Right ventricle myocardium inferior (tissue), 1 donor: ENCODE measurements at regions of chrX and their contacts with region 1.

Region 1: DNA sequence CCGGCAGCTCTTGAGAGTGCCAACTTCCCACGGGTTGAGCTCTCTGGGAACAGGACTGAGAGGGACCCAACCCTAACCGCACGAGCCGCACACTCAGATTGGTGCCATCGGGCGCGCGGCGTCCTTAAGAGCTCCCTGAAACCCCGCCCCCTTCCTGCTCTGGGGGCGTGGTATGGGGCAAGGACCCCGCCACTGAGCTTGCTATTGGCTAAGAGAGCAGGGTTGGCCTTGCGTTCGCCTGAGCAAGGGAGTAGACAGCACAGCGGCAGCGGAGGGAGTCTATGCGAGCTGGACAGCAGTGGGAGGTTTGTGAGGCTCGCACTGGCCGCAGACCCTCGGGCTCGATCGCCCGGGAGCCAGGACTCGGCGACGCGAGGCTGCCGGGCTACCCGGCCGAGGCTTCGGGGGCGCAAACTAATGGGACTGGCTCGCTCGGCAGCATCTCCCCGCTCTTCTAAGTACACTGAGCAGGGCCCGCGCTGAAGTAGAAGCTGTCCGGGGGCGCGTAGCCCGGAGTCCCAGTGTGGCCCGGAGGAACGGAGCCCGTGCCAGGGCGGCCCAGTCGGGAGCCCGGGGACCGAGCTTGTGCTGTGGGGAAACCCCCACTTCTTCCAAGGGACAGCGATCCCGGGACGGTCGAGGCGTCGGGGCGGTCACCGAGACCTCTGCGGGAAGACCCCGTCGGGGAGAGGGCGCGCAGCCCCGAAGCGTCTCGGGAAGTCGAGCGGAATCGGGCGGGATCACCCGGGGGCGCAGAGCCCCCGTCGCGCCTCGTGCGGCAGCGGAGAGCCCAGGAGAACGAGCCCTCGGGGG is at the start of gene EFNB1:
- DNase-seq: peak; percentile 96
- ATAC-seq: peak; percentile 97
- total RNA-seq, gene EFNB1: 18.0 TPM

Region 2: DNA sequence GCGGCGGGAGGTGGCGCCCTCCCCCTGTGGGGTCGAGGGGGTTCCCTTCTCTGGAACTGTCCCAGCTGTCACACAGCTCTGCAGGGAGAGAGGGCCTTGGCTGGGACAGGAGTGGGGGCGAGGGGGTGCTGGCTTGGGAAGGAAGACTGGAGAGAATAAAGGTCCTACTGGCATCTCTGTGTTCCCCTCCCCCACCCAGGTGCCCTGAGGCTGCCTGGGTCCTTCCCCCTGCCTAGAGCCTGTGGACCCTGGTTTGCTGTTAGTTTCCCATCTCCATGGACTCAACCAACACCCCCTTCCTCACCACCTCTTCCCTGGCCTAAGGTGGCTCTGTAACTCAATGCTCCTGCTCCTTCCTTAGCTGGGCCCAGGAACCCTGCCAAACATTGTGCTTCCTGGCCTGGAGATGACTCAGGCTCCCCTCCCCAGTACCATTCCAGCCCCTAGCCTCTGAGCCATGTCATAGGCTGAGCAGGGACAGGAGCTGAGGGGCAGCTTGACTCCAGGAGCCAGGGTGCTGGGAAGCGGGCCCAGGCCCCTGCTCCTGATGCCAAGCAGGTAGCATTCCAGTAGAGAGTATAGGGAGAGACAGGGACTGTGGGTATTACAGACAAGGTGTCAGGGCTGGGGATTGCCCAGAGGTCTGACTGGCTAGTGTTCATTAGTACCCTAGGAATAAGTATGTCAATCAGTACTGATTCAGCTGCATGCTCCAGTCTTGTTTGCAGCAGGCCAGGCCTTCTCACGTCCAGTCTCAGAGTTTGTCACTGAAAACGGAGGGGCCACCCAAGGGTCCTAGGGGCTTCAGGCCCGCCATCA is 100.6 kb after region 1 on chrX:
- intact Hi-C with region 1: loop called (anchors 2 kb)
- DNase-seq: no peak
- ATAC-seq: peak; percentile 29

Region 3: DNA sequence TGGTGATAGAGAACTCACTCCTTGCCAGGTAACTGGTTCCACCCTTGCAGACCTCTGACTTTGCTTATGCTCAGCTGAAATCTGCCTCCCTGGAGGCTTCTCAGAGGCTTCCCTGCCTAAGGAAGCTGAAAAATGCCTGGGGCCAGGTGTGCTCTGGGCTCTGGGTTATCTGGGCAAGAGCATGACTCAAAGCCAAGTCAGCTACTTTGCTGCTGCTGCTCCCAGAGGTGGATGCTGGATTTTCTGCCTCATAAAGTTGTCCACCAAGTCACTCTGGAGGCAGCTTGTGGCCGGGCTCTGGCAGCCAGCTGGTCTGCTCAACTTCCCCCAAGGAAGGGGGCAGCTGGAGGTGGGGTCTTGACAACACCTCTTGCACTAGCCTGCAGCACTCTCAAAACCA is 203.7 kb after region 1 on chrX:
- intact Hi-C with region 1: no loop called
- DNase-seq: no peak
- ATAC-seq: no peak

Region 4: GRCh38 chrX:69060631-69061408 is 231.9 kb after region 1 on chrX:
- intact Hi-C with region 1: loop called (anchors 1 kb)
- DNase-seq: no peak
- ATAC-seq: peak; percentile 62

Region 5: GRCh38 chrX:69222103-69223090 is 393.5 kb after region 1 on chrX:
- intact Hi-C with region 1: loop called (anchors 2 kb)
- DNase-seq: peak; percentile 74
- ATAC-seq: peak; percentile 76

Region 6: DNA sequence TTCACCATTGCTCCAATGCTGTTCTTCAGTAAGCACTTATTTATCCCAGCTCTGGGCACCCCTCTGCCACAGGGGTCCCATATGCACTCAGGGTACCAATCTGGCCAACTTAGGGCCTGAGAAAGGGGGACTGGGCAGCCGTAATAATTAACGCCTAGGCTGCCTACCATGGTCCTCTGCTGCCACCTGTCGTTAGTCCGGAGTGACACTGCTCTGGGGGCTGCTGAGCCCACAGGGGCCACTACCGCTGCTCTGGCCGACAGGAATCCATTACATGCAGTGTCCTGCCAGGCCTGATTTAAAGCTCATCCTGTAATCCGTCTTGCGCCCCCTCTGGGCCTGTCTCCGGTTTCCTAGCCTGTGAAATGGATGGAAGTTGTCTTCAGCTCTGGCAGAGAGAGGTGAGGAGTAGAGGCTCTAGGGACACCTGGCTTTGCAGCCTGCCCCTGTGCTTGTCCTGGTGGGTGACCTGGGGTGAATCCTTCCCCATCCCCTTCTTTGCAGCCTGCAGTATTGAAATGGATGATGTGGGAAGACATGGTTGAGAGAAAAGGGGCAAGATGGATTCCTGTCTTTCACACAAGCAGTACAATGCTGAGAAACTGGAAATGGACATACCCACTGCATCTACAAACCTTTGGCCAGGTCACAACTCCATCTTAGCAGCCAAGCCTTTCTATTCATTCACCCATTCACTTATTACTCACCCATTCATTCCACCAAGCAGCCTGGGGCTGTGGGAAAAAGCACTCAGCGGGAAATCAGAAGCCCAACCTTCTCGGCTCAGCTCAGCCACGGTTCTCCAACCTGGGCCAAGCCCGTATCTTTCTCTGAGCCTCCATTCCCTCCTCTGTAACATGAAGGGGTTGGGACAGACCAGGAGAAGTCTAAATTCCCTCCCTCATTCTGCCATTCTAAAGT is 558.9 kb after region 1 on chrX:
- intact Hi-C with region 1: loop called (anchors 5 kb)
- DNase-seq: peak; percentile 68
- ATAC-seq: peak; percentile 54